ENCODE measurements at regions of chr7 and their contacts with region 1.

Region 1: DNA sequence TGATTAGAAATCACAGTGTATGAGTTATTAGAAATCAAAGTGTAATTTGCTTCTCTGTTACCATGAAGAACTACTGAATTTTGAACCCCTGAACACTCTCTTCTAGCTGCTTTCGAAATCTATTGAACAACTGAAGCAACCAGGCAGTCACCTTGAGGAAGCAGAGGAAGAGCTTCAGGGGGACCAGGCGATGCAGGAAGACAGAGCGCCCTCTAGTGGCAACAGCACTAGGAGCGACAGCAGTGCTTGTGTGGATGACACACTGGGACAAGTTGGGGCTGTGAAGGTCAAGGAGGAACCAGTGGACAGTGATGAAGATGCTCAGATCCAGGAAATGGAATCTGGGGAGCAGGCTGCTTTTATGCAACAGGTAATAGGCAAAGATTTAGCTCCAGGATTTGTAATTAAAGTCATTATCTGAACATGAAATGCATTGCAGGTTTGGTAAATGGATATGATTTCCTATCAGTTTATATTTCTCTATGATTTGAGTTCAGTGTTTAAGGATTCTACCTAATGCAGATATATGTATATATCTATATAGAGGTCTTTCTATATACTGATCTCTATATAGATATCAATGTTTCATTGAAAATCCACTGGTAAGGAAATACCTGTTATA is 170.7 kb downstream of the HDAC9 start:
- DNase-seq: peak; percentile 34 to 64
- H3K4me3 ChIP-seq: no peak overlapping the region
- H3K27ac ChIP-seq: no peak overlapping the region
- H3K4me1 ChIP-seq: no peaks in the 10 kb centered on the region
- H3K27me3 ChIP-seq: no peaks in the 10 kb centered on the region
- CTCF ChIP-seq: peak; percentile 44 to 53 (median 51)
- POLR2A ChIP-seq: no peak

Region 2: DNA sequence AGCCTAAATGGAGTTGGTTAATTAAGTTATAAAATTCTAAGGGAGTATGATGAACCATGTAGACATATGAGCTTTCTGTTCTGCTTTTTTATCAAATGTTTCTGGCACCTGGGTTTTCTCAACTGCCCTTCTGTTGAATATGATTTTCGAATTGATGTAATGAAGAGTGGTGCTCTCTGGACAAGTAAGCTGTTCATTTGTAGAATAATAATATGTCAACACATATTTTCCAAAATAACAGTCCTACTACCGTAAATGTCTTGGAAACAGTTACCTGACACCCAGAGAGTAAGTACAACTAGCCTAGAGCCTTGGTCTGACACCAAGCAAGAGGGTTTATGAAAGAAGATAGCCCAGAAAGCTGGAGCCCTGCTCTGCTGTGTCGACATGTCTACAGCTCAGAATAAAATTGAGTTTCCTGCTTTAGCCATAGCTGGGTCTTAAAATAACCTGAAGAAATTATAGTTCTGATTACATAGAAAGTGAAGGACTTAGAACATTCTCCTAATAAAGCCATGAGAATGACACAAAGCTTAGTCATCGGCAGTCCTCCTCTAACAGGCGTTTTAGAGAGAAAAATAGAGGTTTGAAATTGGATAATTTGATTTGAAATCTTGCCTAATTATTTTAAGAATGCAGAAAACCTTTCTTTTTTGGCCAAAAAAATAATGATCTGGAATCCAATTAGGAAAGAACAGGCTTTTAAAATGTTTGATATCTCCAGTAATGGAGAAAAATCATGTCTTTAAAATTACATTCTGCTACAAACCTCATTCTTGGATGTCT is 145.6 kb before region 1 on chr7:
- intact Hi-C with region 1: loop called (anchors 5 kb)
- DNase-seq: no peak
- H3K4me3 ChIP-seq: no peak overlapping the region
- H3K27ac ChIP-seq: no peak overlapping the region
- H3K4me1 ChIP-seq: no peaks in the 10 kb centered on the region
- H3K27me3 ChIP-seq: no peaks in the 10 kb centered on the region
- CTCF ChIP-seq: no peak
- POLR2A ChIP-seq: no peak

Measured in breast epithelium (tissue), 4 donors.